H1 (cell line): ENCODE measurements at regions of chr11 and their contacts with region 1.

Region 1: GRCh38 chr11:9972989-9973388 is 309.1 kb downstream of the SWAP70 start:
- DNase-seq: no peak
- H3K4me3 ChIP-seq: no peak overlapping the region
- H3K27ac ChIP-seq: no peak overlapping the region
- H3K4me1 ChIP-seq: peaks cover 0 to 8% (median 5%) of the 10 kb centered on the region in 4 experiments; a peak in 4 of 7 replicates
- H3K27me3 ChIP-seq: no peaks in the 10 kb centered on the region
- CTCF ChIP-seq: peak in 2 of 3 experiments; percentile 65 to 71; a peak in 3 of 4 replicates
- EP300 ChIP-seq: no peak
- POLR2A ChIP-seq: no peak
- RAD21 ChIP-seq: peak; percentile 86 to 90

Region 2: GRCh38 chr11:9757809-9758636 is 215.0 kb before region 1 on chr11:
- CTCF ChIA-PET with region 1: interaction called, 13 read pairs
- POLR2A ChIA-PET with region 1: no interaction called
- DNase-seq: peak in 1 of 2 experiments; percentile 91
- H3K4me3 ChIP-seq: peak overlapping the region; percentile 23 to 59 (median 48)
- H3K27ac ChIP-seq: no peak overlapping the region
- H3K4me1 ChIP-seq: peaks cover 0 to 20% (median 14%) of the 10 kb centered on the region in 4 experiments; a peak in 6 of 7 replicates
- H3K27me3 ChIP-seq: no peaks in the 10 kb centered on the region
- CTCF ChIP-seq: peak; percentile 84 to 93 (median 91)
- EP300 ChIP-seq: no peak
- POLR2A ChIP-seq: 0 out of 3 replicates have a peak, but pooled peaks of 1 of the 2 experiments have one; percentile 27
- RAD21 ChIP-seq: peak; percentile 76 to 91

Region 3: DNA sequence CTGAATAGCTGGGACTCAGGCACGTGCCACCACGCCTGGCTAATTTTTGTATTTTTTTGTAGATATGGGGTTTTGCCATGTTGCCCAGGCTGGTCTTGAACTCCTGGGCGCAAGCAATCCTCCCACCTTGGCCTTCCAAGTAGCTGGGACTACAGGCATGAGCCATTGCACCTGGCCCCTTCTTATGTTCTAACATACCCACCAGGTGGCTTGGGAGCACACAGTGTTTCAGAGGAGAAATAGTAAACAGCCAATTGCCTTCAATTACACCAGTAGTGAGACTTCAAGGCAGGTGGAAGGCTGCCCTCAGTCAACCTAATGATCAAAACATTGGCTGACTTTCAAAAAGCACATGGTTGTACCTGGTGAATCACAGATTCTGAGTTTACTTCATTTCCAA is 141.9 kb before region 1 on chr11:
- CTCF ChIA-PET with region 1: interaction called, 11 read pairs
- POLR2A ChIA-PET with region 1: no interaction called
- DNase-seq: no peak
- H3K4me3 ChIP-seq: no peak overlapping the region
- H3K27ac ChIP-seq: no peak overlapping the region; the same call in 1 of the 2 replicates
- H3K4me1 ChIP-seq: no peaks in the 10 kb centered on the region
- H3K27me3 ChIP-seq: no peaks in the 10 kb centered on the region
- CTCF ChIP-seq: peak in 2 of 3 experiments; percentile 14 to 18; a peak in 2 of 4 replicates
- EP300 ChIP-seq: no peak
- POLR2A ChIP-seq: no peak
- RAD21 ChIP-seq: peak; percentile 5 to 46; a peak in 2 of 4 replicates

Region 4: GRCh38 chr11:9861860-9862725 is 110.9 kb before region 1 on chr11:
- CTCF ChIA-PET with region 1: interaction called, 23 read pairs
- POLR2A ChIA-PET with region 1: no interaction called
- DNase-seq: peak in 1 of 2 experiments; percentile 67
- H3K4me3 ChIP-seq: no peak overlapping the region
- H3K27ac ChIP-seq: no peak overlapping the region
- H3K4me1 ChIP-seq: peaks cover 3 to 21% (median 13%) of the 10 kb centered on the region in 4 experiments; a peak in 5 of 7 replicates
- H3K27me3 ChIP-seq: no peaks in the 10 kb centered on the region
- CTCF ChIP-seq: peak; percentile 84 to 91 (median 87)
- EP300 ChIP-seq: no peak
- POLR2A ChIP-seq: no peak
- RAD21 ChIP-seq: peak; percentile 86 to 87

Region 5: GRCh38 chr11:9905501-9905951 is 67.5 kb before region 1 on chr11:
- CTCF ChIA-PET with region 1: interaction called, 11 read pairs
- POLR2A ChIA-PET with region 1: no interaction called
- DNase-seq: no peak
- H3K4me3 ChIP-seq: peak overlapping the region in 1 of 4 experiments; percentile 27; a peak in 1 of 8 replicates
- H3K27ac ChIP-seq: peak overlapping the region; percentile 9; the same call in 1 of the 2 replicates
- H3K4me1 ChIP-seq: peaks cover 0 to 19% (median 9%) of the 10 kb centered on the region in 4 experiments; a peak in 6 of 7 replicates
- H3K27me3 ChIP-seq: no peaks in the 10 kb centered on the region
- CTCF ChIP-seq: no peak
- EP300 ChIP-seq: no peak
- POLR2A ChIP-seq: no peak
- RAD21 ChIP-seq: no peak

Region 6: GRCh38 chr11:9962722-9963121 is 10.3 kb before region 1 on chr11:
- CTCF ChIA-PET with region 1: interaction called, 10 read pairs
- POLR2A ChIA-PET with region 1: no interaction called
- DNase-seq: no peak
- H3K4me3 ChIP-seq: no peak overlapping the region
- H3K27ac ChIP-seq: no peak overlapping the region
- H3K4me1 ChIP-seq: no peaks in the 10 kb centered on the region
- H3K27me3 ChIP-seq: no peaks in the 10 kb centered on the region
- CTCF ChIP-seq: no peak
- EP300 ChIP-seq: no peak
- POLR2A ChIP-seq: no peak
- RAD21 ChIP-seq: no peak

Region 7: DNA sequence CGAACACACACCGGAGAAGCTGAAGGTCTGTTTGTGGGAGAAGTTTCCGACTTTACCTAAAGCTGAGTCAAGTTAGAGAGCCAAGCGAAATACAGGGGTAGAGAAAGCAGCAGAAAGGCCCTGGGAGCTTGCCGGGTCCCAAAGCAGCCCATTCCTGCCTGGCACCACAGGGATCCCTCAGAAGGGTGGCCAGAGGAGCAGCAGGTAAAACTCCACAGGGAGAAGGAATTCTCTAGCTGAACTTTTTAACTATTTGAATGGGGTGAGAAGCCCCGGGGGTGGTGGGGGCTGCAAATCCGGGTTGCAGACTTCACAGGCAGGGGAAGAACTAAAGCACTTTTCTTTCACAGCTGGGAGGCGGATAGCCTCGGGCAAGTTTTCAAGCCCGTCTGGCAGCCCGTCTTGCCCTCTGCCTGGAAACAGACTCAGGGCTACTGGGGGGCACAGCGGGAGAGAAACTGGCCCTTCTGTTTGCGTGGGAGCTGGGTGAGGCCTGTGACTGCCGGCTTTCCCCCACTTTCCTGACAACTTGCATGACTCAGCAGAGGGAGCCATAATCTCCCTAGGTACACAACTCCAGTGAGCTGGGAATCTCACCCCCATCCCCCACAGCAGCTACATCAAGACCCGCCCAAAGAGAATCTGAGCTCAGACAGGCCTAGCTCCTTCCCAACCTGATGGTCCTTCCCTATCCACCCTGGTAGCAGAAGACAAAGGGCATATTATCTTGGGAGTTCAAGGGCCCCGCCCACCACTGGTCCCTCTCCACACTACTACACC is 10.0 kb after region 1 on chr11:
- CTCF ChIA-PET with region 1: interaction called, 21 read pairs
- POLR2A ChIA-PET with region 1: no interaction called
- DNase-seq: peak in 1 of 2 experiments; percentile 75
- H3K4me3 ChIP-seq: no peak overlapping the region
- H3K27ac ChIP-seq: no peak overlapping the region
- H3K4me1 ChIP-seq: peaks cover 0 to 6% (median 3%) of the 10 kb centered on the region in 4 experiments; a peak in 4 of 7 replicates
- H3K27me3 ChIP-seq: peaks cover 0 to 1% (median 0%) of the 10 kb centered on the region in 4 experiments; a peak in 1 of 7 replicates
- CTCF ChIP-seq: 0 out of 4 replicates have a peak, but pooled peaks of 1 of the 3 experiments have one; percentile 1
- EP300 ChIP-seq: no peak
- POLR2A ChIP-seq: no peak
- RAD21 ChIP-seq: no peak

Region 8: GRCh38 chr11:10041748-10042446 is 68.9 kb after region 1 on chr11:
- CTCF ChIA-PET with region 1: no interaction called
- POLR2A ChIA-PET with region 1: no interaction called
- DNase-seq: no peak
- H3K4me3 ChIP-seq: no peak overlapping the region
- H3K27ac ChIP-seq: no peak overlapping the region
- H3K4me1 ChIP-seq: peaks cover 0 to 7% (median 3%) of the 10 kb centered on the region in 4 experiments; a peak in 4 of 7 replicates
- H3K27me3 ChIP-seq: no peaks in the 10 kb centered on the region
- CTCF ChIP-seq: no peak
- EP300 ChIP-seq: no peak
- POLR2A ChIP-seq: no peak
- RAD21 ChIP-seq: no peak

Region 9: GRCh38 chr11:10139143-10139542 is 166.2 kb after region 1 on chr11:
- CTCF ChIA-PET with region 1: no interaction called
- POLR2A ChIA-PET with region 1: no interaction called
- DNase-seq: no peak
- H3K4me3 ChIP-seq: no peak overlapping the region
- H3K27ac ChIP-seq: no peak overlapping the region
- H3K4me1 ChIP-seq: peaks cover 0 to 7% (median 0%) of the 10 kb centered on the region in 4 experiments; a peak in 1 of 7 replicates
- H3K27me3 ChIP-seq: no peaks in the 10 kb centered on the region
- CTCF ChIP-seq: no peak
- EP300 ChIP-seq: no peak
- POLR2A ChIP-seq: no peak
- RAD21 ChIP-seq: no peak